CD4-positive, alpha-beta memory T cell (primary cell): ENCODE measurements at regions of chr10 and their contacts with region 1.

Region 1: GRCh38 chr10:114477285-114477684 is 73.0 kb upstream of the AFAP1L2 start:
- DNase-seq: no peak
- H3K4me3 ChIP-seq: no peak overlapping the region
- H3K4me3 Mint-ChIP-seq: no peak overlapping the region
- H3K27ac ChIP-seq: no peak overlapping the region
- H3K27ac Mint-ChIP-seq: peak overlapping the region in 6 of 7 donors; percentile 16 to 83 (median 74)
- H3K4me1 ChIP-seq: no peaks in the 10 kb centered on the region
- H3K4me1 Mint-ChIP-seq: peaks cover 35 to 68% (median 44%) of the 10 kb centered on the region in 4 donors
- H3K27me3 ChIP-seq: no peaks in the 10 kb centered on the region
- H3K27me3 Mint-ChIP-seq: no peaks in the 10 kb centered on the region

Region 2: GRCh38 chr10:113576852-113577251 is 900.4 kb before region 1 on chr10:
- CTCF ChIA-PET with region 1: no interaction called
- POLR2A ChIA-PET with region 1: no interaction called
- intact Hi-C with region 1: no loop called
- DNase-seq: no peak
- H3K4me3 ChIP-seq: no peak overlapping the region
- H3K4me3 Mint-ChIP-seq: no peak overlapping the region
- H3K27ac ChIP-seq: no peak overlapping the region
- H3K27ac Mint-ChIP-seq: no peak overlapping the region
- H3K4me1 ChIP-seq: no peaks in the 10 kb centered on the region
- H3K4me1 Mint-ChIP-seq: no peaks in the 10 kb centered on the region
- H3K27me3 ChIP-seq: no peaks in the 10 kb centered on the region
- H3K27me3 Mint-ChIP-seq: peaks cover 6 to 11% of the 10 kb centered on the region in 2 donors

Region 3: DNA sequence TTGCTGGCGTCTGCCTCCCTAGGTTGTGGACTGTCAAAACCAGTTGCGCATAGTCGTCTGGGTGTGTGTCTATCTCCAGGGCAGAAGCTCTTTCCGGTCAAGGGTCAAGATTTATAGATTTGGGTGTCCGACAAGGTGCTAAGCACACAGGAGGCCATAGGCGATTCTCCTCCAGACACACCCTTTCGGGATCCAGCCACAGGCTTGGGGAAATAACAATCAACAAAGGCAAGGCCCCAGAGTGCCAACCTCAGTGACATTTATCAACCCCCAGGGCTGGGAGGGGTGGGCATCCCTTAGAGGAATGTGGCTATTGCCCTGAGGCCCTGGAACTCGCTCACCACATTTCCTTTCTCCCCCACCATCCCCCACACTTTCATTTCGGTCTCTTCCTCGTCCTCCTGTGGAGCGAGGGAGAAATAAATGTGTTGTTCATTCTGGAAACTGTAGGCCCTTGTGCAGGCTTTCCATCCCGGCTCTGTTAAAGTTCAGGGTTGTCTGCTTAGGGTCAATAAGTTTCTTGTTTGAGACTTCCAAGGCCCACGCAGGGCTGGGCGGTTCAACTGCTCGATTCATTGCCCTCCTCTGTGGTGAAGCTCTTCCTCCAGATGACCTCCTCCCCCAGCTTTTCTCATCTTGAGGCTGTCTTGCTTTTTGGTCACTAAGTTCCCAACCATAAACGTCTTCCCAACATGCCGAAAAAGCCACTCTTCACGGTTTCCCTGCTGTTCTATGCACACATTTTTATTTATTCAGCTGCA is 130.8 kb before region 1 on chr10:
- CTCF ChIA-PET with region 1: no interaction called
- POLR2A ChIA-PET with region 1: no interaction called
- intact Hi-C with region 1: no loop called
- DNase-seq: no peak
- H3K4me3 ChIP-seq: no peak overlapping the region
- H3K4me3 Mint-ChIP-seq: no peak overlapping the region
- H3K27ac ChIP-seq: no peak overlapping the region
- H3K27ac Mint-ChIP-seq: no peak overlapping the region
- H3K4me1 ChIP-seq: no peaks in the 10 kb centered on the region
- H3K4me1 Mint-ChIP-seq: no peaks in the 10 kb centered on the region
- H3K27me3 ChIP-seq: no peaks in the 10 kb centered on the region
- H3K27me3 Mint-ChIP-seq: peaks cover 2 to 6% of the 10 kb centered on the region in 2 donors

Region 4: DNA sequence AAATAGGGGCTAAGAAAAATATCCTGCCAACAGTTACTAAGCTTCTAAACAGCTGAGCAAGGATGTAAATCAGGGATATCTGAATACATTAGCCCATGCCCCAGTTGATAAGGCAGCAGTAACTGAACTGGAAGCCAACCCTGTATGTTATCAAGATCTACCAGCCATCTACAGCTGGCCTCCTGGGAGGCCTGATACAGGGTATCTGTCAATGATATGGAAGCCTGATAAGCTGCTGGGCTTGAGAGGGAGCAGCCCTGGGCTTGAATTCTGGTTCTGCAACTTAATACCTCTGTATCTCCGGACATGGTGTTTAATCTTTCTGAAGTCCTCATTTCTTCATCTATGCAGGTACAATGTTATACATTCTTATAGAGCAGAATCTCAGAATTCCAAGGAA is 35.1 kb before region 1 on chr10:
- CTCF ChIA-PET with region 1: no interaction called
- POLR2A ChIA-PET with region 1: no interaction called
- intact Hi-C with region 1: no loop called
- DNase-seq: no peak
- H3K4me3 ChIP-seq: no peak overlapping the region
- H3K4me3 Mint-ChIP-seq: no peak overlapping the region
- H3K27ac ChIP-seq: no peak overlapping the region
- H3K27ac Mint-ChIP-seq: peak overlapping the region in 1 of 7 donors; percentile 47
- H3K4me1 ChIP-seq: no peaks in the 10 kb centered on the region
- H3K4me1 Mint-ChIP-seq: peaks cover 0 to 5% (median 0%) of the 10 kb centered on the region in 4 donors
- H3K27me3 ChIP-seq: no peaks in the 10 kb centered on the region
- H3K27me3 Mint-ChIP-seq: no peaks in the 10 kb centered on the region

Region 5: DNA sequence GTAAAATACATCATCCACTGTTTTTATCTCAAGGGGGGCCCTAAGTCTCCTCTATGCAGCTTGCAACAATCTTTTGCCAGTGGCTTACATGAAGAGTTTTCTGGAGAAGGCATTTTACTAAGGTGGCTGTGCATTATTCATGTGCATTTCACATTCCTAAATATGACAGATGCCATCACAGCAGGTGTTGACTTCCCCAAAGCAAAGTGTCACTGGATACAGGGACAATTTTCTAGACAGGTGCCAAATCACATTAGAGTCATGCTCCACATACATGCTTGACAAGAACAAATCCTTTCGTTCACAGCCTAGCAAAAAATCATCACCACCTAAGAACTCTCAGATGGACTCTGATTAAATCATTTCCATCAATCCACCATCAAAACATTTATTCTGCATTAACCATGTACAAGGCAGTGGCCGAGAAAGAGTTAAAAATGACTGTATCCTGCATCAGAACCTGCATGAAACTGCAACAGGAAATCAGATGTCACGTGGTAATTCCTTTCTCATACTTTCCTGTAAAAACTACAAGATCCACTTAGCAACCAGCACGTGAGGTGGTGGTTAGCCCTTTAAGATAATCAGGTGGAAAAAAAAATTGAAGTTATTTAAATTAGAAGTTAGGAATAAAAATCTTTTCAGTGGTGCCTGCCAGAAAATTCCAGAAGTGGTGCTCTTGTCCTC is 15.2 kb after region 1 on chr10:
- CTCF ChIA-PET with region 1: interaction called, 17 read pairs
- POLR2A ChIA-PET with region 1: no interaction called
- intact Hi-C with region 1: loop called (anchors 2 kb)
- DNase-seq: peak; percentile 20 to 54 (median 39)
- H3K4me3 ChIP-seq: no peak overlapping the region
- H3K4me3 Mint-ChIP-seq: peak overlapping the region in 7 of 8 donors; percentile 10 to 68 (median 59)
- H3K27ac ChIP-seq: no peak overlapping the region
- H3K27ac Mint-ChIP-seq: peak overlapping the region; percentile 15 to 84 (median 80)
- H3K4me1 ChIP-seq: peaks cover 53% of the 10 kb centered on the region
- H3K4me1 Mint-ChIP-seq: peaks cover 40 to 62% (median 54%) of the 10 kb centered on the region in 4 donors
- H3K27me3 ChIP-seq: no peaks in the 10 kb centered on the region
- H3K27me3 Mint-ChIP-seq: no peaks in the 10 kb centered on the region